ENCODE measurements at regions of chr6 and their contacts with region 1.

Region 1: DNA sequence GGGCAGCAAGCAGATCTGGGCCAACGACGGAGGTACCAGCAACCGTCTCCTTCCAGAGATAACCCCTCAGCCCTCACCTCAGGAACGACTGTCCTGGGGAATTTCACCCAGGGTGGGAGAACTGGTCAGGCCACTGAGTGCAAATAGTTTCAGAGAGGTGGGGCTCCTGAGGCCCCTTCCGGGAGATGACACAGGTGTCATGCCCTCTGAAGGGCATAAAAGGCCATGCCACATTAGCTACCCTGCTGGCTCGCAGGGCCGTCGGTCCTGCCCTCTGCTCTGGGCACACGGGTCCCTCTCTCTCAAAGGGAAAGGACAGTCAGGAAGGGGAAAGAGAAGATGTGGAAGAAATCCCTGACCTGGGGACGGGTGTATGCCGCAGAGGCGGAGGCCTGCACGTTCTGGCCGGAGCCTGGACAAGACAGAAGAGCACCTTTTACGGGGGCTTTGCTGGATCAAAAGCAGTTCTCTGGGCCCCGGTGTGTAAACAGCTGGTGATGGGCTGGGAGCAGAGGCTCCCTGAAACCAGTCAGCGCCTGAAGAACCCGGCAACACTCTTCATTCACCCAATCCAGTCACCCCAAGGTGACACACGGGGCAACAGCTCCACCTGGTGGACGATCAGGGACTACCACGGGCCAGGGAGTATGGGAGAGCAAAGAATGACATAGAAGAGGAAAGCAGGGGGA is 6.4 kb upstream of the TAF8 start:
- DNase-seq: no peak
- H3K4me3 ChIP-seq: peak overlapping the region in 3 of 4 donors; percentile 14 to 47 (median 20)
- H3K27ac ChIP-seq: peak overlapping the region; percentile 58 to 97 (median 92)
- H3K4me1 ChIP-seq: peaks cover 43 to 99% (median 51%) of the 10 kb centered on the region in 3 donors
- H3K27me3 ChIP-seq: no peaks in the 10 kb centered on the region
- CTCF ChIP-seq: peak; percentile 96 to 99 (median 97)
- POLR2A ChIP-seq: no peak

Region 2: GRCh38 chr6:41779793-41780545 is 264.0 kb before region 1 on chr6 and contains the start of gene FRS3:
- intact Hi-C with region 1: loop called (anchors 5 kb)
- DNase-seq: peak; percentile 74
- H3K4me3 ChIP-seq: peak within 1 kb of the TSS; percentile 47 to 91 (median 78)
- H3K27ac ChIP-seq: peak within 1 kb of the TSS; percentile 85 to 94 (median 91)
- H3K4me1 ChIP-seq: peaks cover 32 to 59% (median 34%) of the 10 kb centered on the region in 3 donors
- H3K27me3 ChIP-seq: no peaks in the 10 kb centered on the region
- CTCF ChIP-seq: peak; percentile 65 to 98 (median 96)
- POLR2A ChIP-seq: peak in 2 of 4 donors; percentile 15 to 36
- total RNA-seq, gene FRS3: 0.31 to 5.5 (median 1.5) TPM

Region 3: DNA sequence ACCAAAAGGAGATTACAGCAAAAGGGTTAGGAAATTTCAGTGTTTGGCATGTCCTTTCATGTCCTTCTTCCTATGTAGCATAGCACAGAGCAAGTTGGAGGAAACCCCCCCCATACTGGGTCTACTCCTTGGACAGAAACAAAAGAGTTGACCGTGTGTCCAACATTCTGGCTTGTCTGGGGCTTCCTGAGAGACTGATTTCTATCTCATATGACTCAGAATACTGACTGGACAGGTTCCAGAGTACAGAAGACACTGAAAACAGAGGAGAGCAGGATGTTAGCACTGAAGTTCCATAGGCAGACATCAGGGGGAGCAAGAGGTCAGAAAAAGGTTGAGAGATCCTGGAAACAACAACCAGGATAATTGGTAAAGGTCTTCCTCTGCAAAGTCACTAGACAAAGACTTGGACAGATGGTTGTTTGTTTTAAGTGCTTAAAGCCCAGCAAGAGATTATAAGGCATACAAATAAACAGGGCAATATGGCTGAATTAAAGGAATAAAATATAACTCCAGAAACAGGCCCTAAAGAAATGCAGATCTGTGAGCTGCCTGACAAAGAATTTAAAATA is 197.2 kb before region 1 on chr6:
- intact Hi-C with region 1: loop called (anchors 5 kb)
- DNase-seq: no peak
- H3K4me3 ChIP-seq: no peak overlapping the region
- H3K27ac ChIP-seq: peak overlapping the region; percentile 11 to 72 (median 44)
- H3K4me1 ChIP-seq: peaks cover 0 to 15% (median 6%) of the 10 kb centered on the region in 3 donors
- H3K27me3 ChIP-seq: no peaks in the 10 kb centered on the region
- CTCF ChIP-seq: peak; percentile 47 to 91 (median 81)
- POLR2A ChIP-seq: no peak

Region 4: GRCh38 chr6:41936073-41936837 is 107.7 kb before region 1 on chr6:
- intact Hi-C with region 1: loop called (anchors 5 kb)
- DNase-seq: no peak
- H3K4me3 ChIP-seq: no peak overlapping the region
- H3K27ac ChIP-seq: peak overlapping the region in 3 of 4 donors; percentile 4 to 31 (median 26)
- H3K4me1 ChIP-seq: peaks cover 44 to 58% (median 48%) of the 10 kb centered on the region in 3 donors
- H3K27me3 ChIP-seq: no peaks in the 10 kb centered on the region
- CTCF ChIP-seq: peak; percentile 68 to 87 (median 75)
- POLR2A ChIP-seq: no peak

Region 5: DNA sequence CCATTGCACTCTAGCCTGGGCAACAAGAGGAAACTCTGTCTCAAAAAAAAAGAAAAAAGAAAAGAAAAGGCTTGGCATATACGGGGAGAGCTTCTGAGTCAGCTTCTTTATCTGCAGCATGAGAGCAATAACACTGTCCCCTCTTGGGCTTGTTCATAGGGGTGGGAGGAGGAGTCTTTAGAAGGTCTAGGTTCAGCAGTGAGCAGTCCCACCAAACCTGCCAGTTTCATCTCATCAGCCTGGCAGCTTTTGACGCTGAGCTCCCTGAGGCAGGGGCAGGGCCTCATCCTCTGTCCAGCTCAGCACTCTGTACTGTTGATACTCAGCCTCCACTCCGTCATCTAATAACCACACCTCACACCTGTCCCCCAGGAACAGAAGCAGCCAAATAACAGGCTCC is 104.1 kb after region 1 on chr6:
- intact Hi-C with region 1: no loop called
- DNase-seq: no peak
- H3K4me3 ChIP-seq: no peak overlapping the region
- H3K27ac ChIP-seq: peak overlapping the region in 1 of 4 donors; percentile 33
- H3K4me1 ChIP-seq: peaks cover 1 to 13% (median 3%) of the 10 kb centered on the region in 3 donors
- H3K27me3 ChIP-seq: peaks cover 0 to 15% (median 0%) of the 10 kb centered on the region in 4 donors
- CTCF ChIP-seq: no peak
- POLR2A ChIP-seq: no peak